ENCODE measurements at regions of chrX and their contacts with region 1.

Region 1: DNA sequence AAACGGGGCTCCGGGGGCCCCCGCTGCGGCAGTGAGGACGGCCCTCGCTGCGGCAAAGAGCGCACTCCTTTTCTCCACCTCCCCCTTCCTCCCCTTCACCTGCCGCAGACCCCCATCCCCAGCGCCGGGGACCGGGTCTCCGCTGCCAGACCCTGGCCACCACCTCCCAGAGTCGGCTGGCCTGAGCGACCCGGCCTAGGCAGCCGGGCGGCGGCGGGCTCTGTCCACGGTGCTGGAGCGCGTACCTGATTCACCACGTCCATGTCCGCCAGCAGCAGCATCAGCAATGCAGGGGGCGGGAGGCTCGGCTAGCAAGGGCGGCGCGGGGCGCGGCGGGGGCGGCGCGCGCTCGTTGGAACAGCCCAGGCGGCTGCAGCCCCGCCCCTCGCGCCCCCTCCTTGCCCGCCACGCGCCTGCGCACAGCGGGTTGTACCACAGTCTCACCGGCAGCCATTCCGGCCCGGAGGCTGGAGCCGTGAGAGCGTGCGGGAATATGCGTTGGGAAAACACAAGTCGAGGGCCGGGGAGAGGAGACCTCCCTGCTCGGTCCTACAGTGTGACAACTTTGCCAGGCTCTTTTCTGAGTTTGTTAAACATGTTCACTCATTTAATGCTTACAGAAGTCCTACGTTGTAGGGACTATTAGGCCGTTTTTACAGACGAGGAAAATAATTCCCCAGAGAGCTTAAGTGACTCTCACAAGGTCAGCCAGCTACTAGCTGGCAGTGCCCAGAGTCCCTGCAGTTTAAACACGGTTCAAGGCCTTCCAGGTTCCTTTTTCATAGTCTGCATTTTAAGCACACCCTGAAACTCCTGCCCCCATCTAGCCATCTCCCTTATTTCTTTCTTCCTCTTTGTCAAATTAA is at the start of gene SYP:
- DNase-seq: peak; percentile 70 to 81 (median 70)
- H3K4me3 ChIP-seq: peak within 1 kb of the TSS; percentile 29 to 57 (median 36)
- H3K4me3 Mint-ChIP-seq: peak within 1 kb of the TSS; percentile 67 to 70
- H3K27ac ChIP-seq: no peak within 1 kb of the TSS
- H3K27ac Mint-ChIP-seq: peak within 1 kb of the TSS in 3 of 7 donors; percentile 20 to 55 (median 22)
- H3K4me1 ChIP-seq: peaks cover 10 to 11% of the 10 kb centered on the region in 2 donors
- H3K4me1 Mint-ChIP-seq: peaks cover 10% of the 10 kb centered on the region
- H3K27me3 ChIP-seq: peaks cover 0 to 13% of the 10 kb centered on the region in 2 donors
- H3K27me3 Mint-ChIP-seq: peaks cover 9 to 22% (median 12%) of the 10 kb centered on the region in 3 donors
- CTCF ChIP-seq: no peak
- polyA plus RNA-seq, gene SYP: 0.27 to 0.69 (median 0.68) TPM

Region 2: DNA sequence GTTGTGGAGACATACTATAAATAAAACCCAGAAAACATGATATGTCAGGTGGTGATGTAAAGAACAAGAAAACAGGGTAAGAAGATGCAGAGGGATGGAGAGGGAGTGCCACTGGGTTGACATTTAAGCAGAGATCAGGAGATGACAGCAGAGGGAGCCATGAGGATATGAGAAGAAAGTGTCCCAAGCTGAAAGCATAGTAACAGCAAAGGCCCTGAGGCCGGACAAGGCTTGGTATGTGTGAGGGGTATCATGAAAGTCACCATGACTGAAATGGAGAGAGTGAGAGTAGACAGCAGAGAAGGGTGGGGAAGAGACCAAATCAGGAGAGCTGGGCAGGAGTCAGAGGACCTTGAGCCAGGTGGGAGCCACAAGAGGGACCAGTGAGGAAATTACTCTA is 80.0 kb before region 1 on chrX:
- intact Hi-C with region 1: no loop called
- DNase-seq: no peak
- H3K4me3 ChIP-seq: no peak overlapping the region
- H3K4me3 Mint-ChIP-seq: no peak overlapping the region
- H3K27ac ChIP-seq: no peak overlapping the region
- H3K27ac Mint-ChIP-seq: peak overlapping the region in 2 of 7 donors; percentile 15 to 55
- H3K4me1 ChIP-seq: peaks cover 10 to 12% of the 10 kb centered on the region in 2 donors
- H3K4me1 Mint-ChIP-seq: peaks cover 9% of the 10 kb centered on the region
- H3K27me3 ChIP-seq: no peaks in the 10 kb centered on the region
- H3K27me3 Mint-ChIP-seq: peaks cover 0 to 12% (median 2%) of the 10 kb centered on the region in 3 donors
- CTCF ChIP-seq: no peak

Region 3: GRCh38 chrX:49237060-49237459 is 36.9 kb after region 1 on chrX:
- intact Hi-C with region 1: loop called in 1 of 2 experiments (anchors 5 kb)
- DNase-seq: peak; percentile 65 to 71 (median 70)
- H3K4me3 ChIP-seq: peak overlapping the region in 1 of 3 experiments; percentile 74
- H3K4me3 Mint-ChIP-seq: peak overlapping the region; percentile 66 to 83
- H3K27ac ChIP-seq: peak overlapping the region; percentile 73 to 89
- H3K27ac Mint-ChIP-seq: peak overlapping the region; percentile 79 to 97 (median 90)
- H3K4me1 ChIP-seq: peaks cover 32 to 36% of the 10 kb centered on the region in 2 donors
- H3K4me1 Mint-ChIP-seq: peaks cover 30% of the 10 kb centered on the region
- H3K27me3 ChIP-seq: no peaks in the 10 kb centered on the region
- H3K27me3 Mint-ChIP-seq: peaks cover 0 to 3% (median 0%) of the 10 kb centered on the region in 3 donors
- CTCF ChIP-seq: no peak

Region 4: GRCh38 chrX:49257846-49258748 is 58.0 kb after region 1 on chrX:
- intact Hi-C with region 1: no loop called
- DNase-seq: no peak
- H3K4me3 ChIP-seq: no peak overlapping the region
- H3K4me3 Mint-ChIP-seq: no peak overlapping the region
- H3K27ac ChIP-seq: no peak overlapping the region
- H3K27ac Mint-ChIP-seq: no peak overlapping the region
- H3K4me1 ChIP-seq: peaks cover 9% of the 10 kb centered on the region in 2 donors
- H3K4me1 Mint-ChIP-seq: peaks cover 11% of the 10 kb centered on the region
- H3K27me3 ChIP-seq: no peaks in the 10 kb centered on the region
- H3K27me3 Mint-ChIP-seq: peaks cover 2 to 12% (median 3%) of the 10 kb centered on the region in 3 donors
- CTCF ChIP-seq: no peak